ENCODE measurements at regions of chr13 and their contacts with region 1.

Region 1: DNA sequence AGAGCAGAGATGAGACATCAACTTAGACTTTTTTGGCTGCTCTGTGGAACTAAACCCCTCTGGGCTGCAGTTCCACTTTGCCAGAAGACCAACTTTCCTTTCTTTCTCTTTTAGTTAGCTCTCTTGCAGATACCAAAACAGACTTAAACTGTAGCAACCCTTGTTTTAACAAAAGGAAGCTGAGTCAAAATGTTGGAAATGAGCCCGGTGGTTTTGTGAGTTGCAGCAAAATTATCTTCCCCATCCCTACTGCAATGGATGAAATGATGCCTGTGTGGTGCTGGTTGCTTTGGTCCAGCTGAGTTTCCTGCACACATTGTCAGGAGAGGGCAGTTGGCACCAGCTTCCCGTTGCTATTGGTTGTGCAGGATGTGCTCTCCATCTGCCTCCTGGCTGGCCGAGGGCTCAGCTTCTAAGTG is 115.3 kb downstream of the LRCH1 start:
- DNase-seq: peak; percentile 50
- ATAC-seq: peak; percentile 52
- H3K4me3 Mint-ChIP-seq: peak overlapping the region; percentile 86
- H3K27ac Mint-ChIP-seq: peak overlapping the region; percentile 97
- H3K4me1 Mint-ChIP-seq: peaks cover 39% of the 10 kb centered on the region
- H3K27me3 Mint-ChIP-seq: no peaks in the 10 kb centered on the region

Region 2: GRCh38 chr13:46679369-46680120 is 11.2 kb after region 1 on chr13:
- CTCF ChIA-PET with region 1: interaction called, 15 read pairs
- DNase-seq: peak; percentile 74
- ATAC-seq: peak; percentile 94
- H3K4me3 Mint-ChIP-seq: no peak overlapping the region
- H3K27ac Mint-ChIP-seq: no peak overlapping the region
- H3K4me1 Mint-ChIP-seq: peaks cover 36% of the 10 kb centered on the region
- H3K27me3 Mint-ChIP-seq: no peaks in the 10 kb centered on the region